ENCODE measurements at regions of chr11 and their contacts with region 1.

Region 1: GRCh38 chr11:130131961-130132850 is 27.4 kb upstream of the ST14 start:
- DNase-seq: peak in 13 of 14 experiments; percentile 9 to 80 (median 37)
- ATAC-seq: peak; percentile 88
- H3K4me3 ChIP-seq: no peak overlapping the region
- H3K4me3 Mint-ChIP-seq: no peak overlapping the region
- H3K27ac ChIP-seq: no peak overlapping the region
- H3K27ac Mint-ChIP-seq: no peak overlapping the region
- H3K4me1 ChIP-seq: no peaks in the 10 kb centered on the region
- H3K4me1 Mint-ChIP-seq: no peaks in the 10 kb centered on the region
- H3K27me3 ChIP-seq: no peaks in the 10 kb centered on the region
- H3K27me3 Mint-ChIP-seq: no peaks in the 10 kb centered on the region
- CTCF ChIP-seq: peak; percentile 91

Region 2: GRCh38 chr11:129364143-129364654 is 768.0 kb before region 1 on chr11:
- CTCF ChIA-PET with region 1: no interaction called
- POLR2A ChIA-PET with region 1: no interaction called
- intact Hi-C with region 1: loop called (anchors 1 to 5 kb)
- DNase-seq: peak; percentile 62 to 85 (median 70)
- ATAC-seq: peak; percentile 99
- H3K4me3 ChIP-seq: no peak overlapping the region
- H3K4me3 Mint-ChIP-seq: no peak overlapping the region
- H3K27ac ChIP-seq: no peak overlapping the region
- H3K27ac Mint-ChIP-seq: no peak overlapping the region
- H3K4me1 ChIP-seq: peaks cover 5% of the 10 kb centered on the region
- H3K4me1 Mint-ChIP-seq: no peaks in the 10 kb centered on the region
- H3K27me3 ChIP-seq: peaks cover 13 to 60% of the 10 kb centered on the region in 2 experiments
- H3K27me3 Mint-ChIP-seq: peaks cover 40% of the 10 kb centered on the region
- CTCF ChIP-seq: peak; percentile 99

Region 3: DNA sequence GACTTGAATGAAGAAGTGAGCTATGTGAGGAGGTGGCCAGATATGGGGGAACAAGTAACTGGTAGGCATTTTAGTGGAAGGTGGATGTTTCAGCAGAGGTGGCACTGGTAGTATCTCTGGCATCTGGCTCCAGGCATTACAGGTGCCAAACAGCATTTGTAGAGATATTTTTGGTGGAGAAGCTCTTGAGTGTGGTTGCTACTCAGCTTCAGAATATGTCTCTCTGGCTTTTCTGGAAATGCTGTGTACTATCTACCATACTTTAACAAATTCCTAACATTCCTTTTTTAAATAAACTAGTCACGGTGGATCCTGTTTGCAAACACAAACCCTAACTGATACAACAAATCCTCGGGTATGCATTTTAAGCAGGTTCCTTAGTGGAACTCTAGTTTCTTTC is 628.6 kb before region 1 on chr11:
- CTCF ChIA-PET with region 1: no interaction called
- POLR2A ChIA-PET with region 1: no interaction called
- intact Hi-C with region 1: no loop called
- DNase-seq: no peak
- ATAC-seq: no peak
- H3K4me3 ChIP-seq: no peak overlapping the region
- H3K4me3 Mint-ChIP-seq: no peak overlapping the region
- H3K27ac ChIP-seq: no peak overlapping the region
- H3K27ac Mint-ChIP-seq: no peak overlapping the region
- H3K4me1 ChIP-seq: no peaks in the 10 kb centered on the region
- H3K4me1 Mint-ChIP-seq: no peaks in the 10 kb centered on the region
- H3K27me3 ChIP-seq: no peaks in the 10 kb centered on the region
- H3K27me3 Mint-ChIP-seq: no peaks in the 10 kb centered on the region
- CTCF ChIP-seq: no peak

Region 4: DNA sequence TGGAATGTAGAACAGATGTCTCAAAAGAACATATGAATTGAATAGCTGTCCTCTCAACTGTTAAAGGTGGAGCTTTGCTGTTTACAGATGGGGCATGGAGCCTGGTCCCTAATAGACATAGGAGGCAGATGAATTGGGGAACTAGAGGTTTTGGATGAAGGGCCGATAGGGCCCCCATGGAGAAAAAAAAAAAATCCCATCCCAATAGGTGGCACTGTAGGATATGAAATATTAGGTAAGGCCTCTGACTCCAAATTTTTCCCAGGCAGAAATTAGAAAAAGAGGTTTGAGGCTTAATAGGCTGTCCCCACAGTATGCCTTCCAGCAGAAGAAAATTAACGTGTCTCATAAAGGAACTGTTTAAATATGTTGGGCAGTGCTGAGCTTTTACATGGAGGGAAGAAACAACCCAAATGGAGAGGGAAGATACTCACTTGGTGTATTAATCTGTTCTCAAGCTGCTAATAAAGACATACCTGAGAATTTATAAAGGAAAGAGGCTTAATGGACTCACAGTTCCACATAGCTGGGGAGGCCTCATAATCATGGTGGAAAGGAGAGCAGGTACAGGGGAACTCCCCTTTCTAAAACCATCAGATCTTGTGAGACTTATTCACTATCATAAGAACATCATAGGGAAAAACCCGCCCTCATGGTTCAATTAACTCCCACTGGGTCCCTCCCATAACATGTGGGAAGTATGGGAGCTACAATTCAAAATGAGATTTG is 346.7 kb before region 1 on chr11:
- CTCF ChIA-PET with region 1: no interaction called
- POLR2A ChIA-PET with region 1: no interaction called
- intact Hi-C with region 1: loop called in 1 of 2 experiments (anchors 5 kb)
- DNase-seq: peak in 3 of 14 experiments; percentile 7 to 43 (median 29)
- ATAC-seq: no peak
- H3K4me3 ChIP-seq: no peak overlapping the region
- H3K4me3 Mint-ChIP-seq: no peak overlapping the region
- H3K27ac ChIP-seq: no peak overlapping the region
- H3K27ac Mint-ChIP-seq: no peak overlapping the region
- H3K4me1 ChIP-seq: peaks cover 4% of the 10 kb centered on the region
- H3K4me1 Mint-ChIP-seq: peaks cover 8% of the 10 kb centered on the region
- H3K27me3 ChIP-seq: no peaks in the 10 kb centered on the region
- H3K27me3 Mint-ChIP-seq: no peaks in the 10 kb centered on the region
- CTCF ChIP-seq: peak; percentile 67

Region 5: GRCh38 chr11:129922674-129923073 is 209.5 kb before region 1 on chr11:
- CTCF ChIA-PET with region 1: interaction called, 18 read pairs
- POLR2A ChIA-PET with region 1: interaction called, 25 read pairs
- intact Hi-C with region 1: loop called (anchors 1 kb)
- DNase-seq: no peak
- ATAC-seq: no peak
- H3K4me3 ChIP-seq: no peak overlapping the region
- H3K4me3 Mint-ChIP-seq: no peak overlapping the region
- H3K27ac ChIP-seq: no peak overlapping the region
- H3K27ac Mint-ChIP-seq: no peak overlapping the region
- H3K4me1 ChIP-seq: peaks cover 7% of the 10 kb centered on the region
- H3K4me1 Mint-ChIP-seq: peaks cover 5% of the 10 kb centered on the region
- H3K27me3 ChIP-seq: no peaks in the 10 kb centered on the region
- H3K27me3 Mint-ChIP-seq: no peaks in the 10 kb centered on the region
- CTCF ChIP-seq: no peak

Region 6: DNA sequence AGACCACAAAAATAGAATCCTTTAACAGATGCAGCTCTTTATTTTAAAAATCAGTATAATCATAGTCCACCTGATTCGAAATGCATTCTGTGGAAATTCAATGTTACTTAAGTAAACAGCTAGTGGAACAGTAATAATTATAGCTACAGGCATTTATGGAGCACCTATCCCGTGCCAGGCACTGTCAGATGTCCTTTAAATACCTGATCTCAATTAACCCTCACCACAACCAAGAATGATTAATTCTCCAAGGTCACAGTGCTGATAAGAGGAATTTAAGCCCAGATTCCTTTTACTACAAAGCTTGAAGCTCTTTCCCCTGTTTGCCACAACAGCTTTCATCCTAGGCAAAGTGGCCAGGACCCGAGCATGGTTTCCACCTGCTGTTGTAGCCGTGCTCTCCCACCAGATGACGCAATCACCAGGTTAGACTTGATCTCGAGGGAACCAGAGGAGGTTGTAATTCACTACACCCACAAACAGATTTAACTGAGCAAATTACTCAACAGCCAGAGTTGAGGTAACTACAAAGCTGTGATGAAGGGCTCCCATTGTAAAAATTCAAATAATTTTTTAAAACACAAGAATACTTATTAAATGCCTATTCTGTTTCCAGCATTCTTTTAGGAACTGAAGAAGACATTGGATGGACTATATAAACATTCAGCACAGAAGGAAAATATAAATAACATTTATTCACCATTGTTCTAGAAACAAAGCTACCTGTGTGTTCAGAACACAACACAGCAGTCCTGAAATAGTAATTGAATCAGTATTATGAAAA is 139.9 kb before region 1 on chr11:
- CTCF ChIA-PET with region 1: interaction called, 28 read pairs
- POLR2A ChIA-PET with region 1: interaction called, 7 read pairs
- intact Hi-C with region 1: loop called (anchors 1 kb)
- DNase-seq: peak; percentile 16 to 71 (median 36)
- ATAC-seq: peak; percentile 98
- H3K4me3 ChIP-seq: no peak overlapping the region
- H3K4me3 Mint-ChIP-seq: no peak overlapping the region
- H3K27ac ChIP-seq: no peak overlapping the region
- H3K27ac Mint-ChIP-seq: no peak overlapping the region
- H3K4me1 ChIP-seq: no peaks in the 10 kb centered on the region
- H3K4me1 Mint-ChIP-seq: peaks cover 29% of the 10 kb centered on the region
- H3K27me3 ChIP-seq: no peaks in the 10 kb centered on the region
- H3K27me3 Mint-ChIP-seq: no peaks in the 10 kb centered on the region
- CTCF ChIP-seq: peak; percentile 41

Region 7: GRCh38 chr11:130069684-130070108 is 62.5 kb before region 1 on chr11 and contains the start of gene APLP2:
- CTCF ChIA-PET with region 1: interaction called, 5 read pairs
- POLR2A ChIA-PET with region 1: interaction called, 3 read pairs
- intact Hi-C with region 1: loop called in 1 of 2 experiments (anchors 2 kb)
- DNase-seq: peak; percentile 92 to 99 (median 97)
- ATAC-seq: peak; percentile 92
- H3K4me3 ChIP-seq: peak within 1 kb of the TSS; percentile 64
- H3K4me3 Mint-ChIP-seq: peak within 1 kb of the TSS; percentile 99
- H3K27ac ChIP-seq: peak within 1 kb of the TSS; percentile 58 to 78
- H3K27ac Mint-ChIP-seq: peak within 1 kb of the TSS; percentile 92
- H3K4me1 ChIP-seq: peaks cover 20% of the 10 kb centered on the region
- H3K4me1 Mint-ChIP-seq: peaks cover 27% of the 10 kb centered on the region
- H3K27me3 ChIP-seq: no peaks in the 10 kb centered on the region
- H3K27me3 Mint-ChIP-seq: peaks cover 4% of the 10 kb centered on the region
- CTCF ChIP-seq: no peak
- total RNA-seq, gene APLP2: 28.8 to 29.5 TPM

Region 8: GRCh38 chr11:130159657-130160497 is 27.7 kb after region 1 on chr11 and contains the start of gene ST14:
- CTCF ChIA-PET with region 1: no interaction called
- POLR2A ChIA-PET with region 1: no interaction called
- intact Hi-C with region 1: no loop called
- DNase-seq: peak in 2 of 14 experiments; percentile 9 to 31
- ATAC-seq: no peak
- H3K4me3 ChIP-seq: peak within 1 kb of the TSS; percentile 5
- H3K4me3 Mint-ChIP-seq: peak within 1 kb of the TSS; percentile 30
- H3K27ac ChIP-seq: no peak within 1 kb of the TSS
- H3K27ac Mint-ChIP-seq: no peak within 1 kb of the TSS
- H3K4me1 ChIP-seq: peaks cover 19% of the 10 kb centered on the region
- H3K4me1 Mint-ChIP-seq: peaks cover 26% of the 10 kb centered on the region
- H3K27me3 ChIP-seq: peaks cover 30 to 38% of the 10 kb centered on the region in 2 experiments
- H3K27me3 Mint-ChIP-seq: peaks cover 64% of the 10 kb centered on the region
- CTCF ChIP-seq: no peak
- total RNA-seq, gene ST14: 0.25 to 0.31 TPM

Region 9: DNA sequence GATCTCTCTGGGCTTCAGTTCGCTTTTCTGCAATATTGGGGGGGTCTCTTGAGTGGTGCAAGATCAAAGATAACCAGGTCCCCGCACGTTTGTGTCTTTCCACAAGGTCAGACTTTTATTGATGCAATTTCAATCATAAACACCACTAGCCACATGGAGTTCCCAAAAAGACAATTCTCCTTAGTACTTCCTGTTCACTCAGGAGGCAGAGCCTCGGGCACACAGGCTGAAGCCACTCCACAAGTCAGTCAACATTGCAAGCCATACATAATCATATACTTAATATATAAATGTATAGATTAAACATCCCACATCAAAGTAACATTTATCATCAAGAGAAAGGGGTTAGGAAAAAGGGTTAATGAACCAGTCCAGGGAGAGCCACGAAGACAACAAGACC is 39.3 kb after region 1 on chr11:
- CTCF ChIA-PET with region 1: no interaction called
- POLR2A ChIA-PET with region 1: no interaction called
- intact Hi-C with region 1: no loop called
- DNase-seq: no peak
- ATAC-seq: no peak
- H3K4me3 ChIP-seq: no peak overlapping the region
- H3K4me3 Mint-ChIP-seq: no peak overlapping the region
- H3K27ac ChIP-seq: no peak overlapping the region
- H3K27ac Mint-ChIP-seq: no peak overlapping the region
- H3K4me1 ChIP-seq: no peaks in the 10 kb centered on the region
- H3K4me1 Mint-ChIP-seq: no peaks in the 10 kb centered on the region
- H3K27me3 ChIP-seq: peaks cover under 1 to 4% of the 10 kb centered on the region in 2 experiments
- H3K27me3 Mint-ChIP-seq: peaks cover 36% of the 10 kb centered on the region
- CTCF ChIP-seq: no peak

Region 10: DNA sequence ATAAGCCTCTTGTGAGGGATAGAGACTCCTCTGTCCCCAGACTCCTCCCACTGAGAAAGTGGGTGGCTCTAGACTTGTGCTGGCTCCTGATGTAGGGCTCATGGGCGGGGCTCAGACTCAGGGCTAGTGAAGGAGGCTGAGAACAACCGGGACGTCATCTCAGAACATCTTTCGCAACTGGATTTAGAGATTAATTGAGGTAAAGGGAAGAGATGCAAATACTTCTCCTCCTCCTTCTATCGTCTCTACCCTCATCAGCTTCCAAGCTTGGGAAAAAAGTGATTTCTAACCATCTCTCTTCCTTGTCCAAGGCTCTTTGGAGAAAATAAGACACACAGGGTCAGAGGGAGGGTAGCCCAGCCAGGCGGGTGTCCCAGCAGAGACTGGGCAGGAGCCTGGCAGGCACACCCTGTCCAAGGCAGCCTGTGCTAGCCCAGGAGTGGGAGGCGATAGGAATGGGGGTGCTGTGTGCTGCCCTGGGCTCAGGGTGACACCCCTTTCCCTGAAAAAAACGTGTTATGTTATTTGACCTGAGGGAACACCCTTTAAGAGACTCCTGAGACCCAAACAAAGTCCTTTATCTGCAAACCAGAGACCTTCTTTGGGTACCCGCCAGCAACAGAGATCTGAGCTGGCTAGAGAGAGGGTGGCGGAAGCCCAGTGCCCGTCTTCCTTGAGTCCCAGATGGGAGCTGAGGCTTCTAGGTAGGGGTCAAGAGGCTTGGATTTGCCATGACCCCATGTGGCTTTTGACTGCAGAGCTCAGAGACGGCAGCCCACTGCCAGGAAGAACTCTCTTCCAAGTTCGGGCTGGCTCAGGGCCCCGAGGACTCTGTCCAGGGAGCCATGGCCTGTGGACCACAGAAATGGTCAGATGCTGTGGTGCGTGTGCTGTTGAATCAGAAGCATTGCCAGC is 477.2 kb after region 1 on chr11:
- CTCF ChIA-PET with region 1: no interaction called
- POLR2A ChIA-PET with region 1: no interaction called
- intact Hi-C with region 1: no loop called
- DNase-seq: no peak
- ATAC-seq: no peak
- H3K4me3 ChIP-seq: no peak overlapping the region
- H3K4me3 Mint-ChIP-seq: no peak overlapping the region
- H3K27ac ChIP-seq: no peak overlapping the region
- H3K27ac Mint-ChIP-seq: no peak overlapping the region
- H3K4me1 ChIP-seq: no peaks in the 10 kb centered on the region
- H3K4me1 Mint-ChIP-seq: no peaks in the 10 kb centered on the region
- H3K27me3 ChIP-seq: no peaks in the 10 kb centered on the region
- H3K27me3 Mint-ChIP-seq: peaks cover 15% of the 10 kb centered on the region
- CTCF ChIP-seq: no peak